Dorsolateral prefrontal cortex (tissue), 120 donors: ENCODE measurements at regions of chr13 and their contacts with region 1.

Region 1: GRCh38 chr13:65656740-65657329 is 1573.3 kb downstream of the PCDH9 start:
- DNase-seq: no peak
- H3K4me3 ChIP-seq: no peak overlapping the region
- H3K27ac ChIP-seq: no peak overlapping the region
- H3K27me3 ChIP-seq: no peaks in the 10 kb centered on the region
- CTCF ChIP-seq: peak; percentile 35 to 80 (median 62)

Region 2: DNA sequence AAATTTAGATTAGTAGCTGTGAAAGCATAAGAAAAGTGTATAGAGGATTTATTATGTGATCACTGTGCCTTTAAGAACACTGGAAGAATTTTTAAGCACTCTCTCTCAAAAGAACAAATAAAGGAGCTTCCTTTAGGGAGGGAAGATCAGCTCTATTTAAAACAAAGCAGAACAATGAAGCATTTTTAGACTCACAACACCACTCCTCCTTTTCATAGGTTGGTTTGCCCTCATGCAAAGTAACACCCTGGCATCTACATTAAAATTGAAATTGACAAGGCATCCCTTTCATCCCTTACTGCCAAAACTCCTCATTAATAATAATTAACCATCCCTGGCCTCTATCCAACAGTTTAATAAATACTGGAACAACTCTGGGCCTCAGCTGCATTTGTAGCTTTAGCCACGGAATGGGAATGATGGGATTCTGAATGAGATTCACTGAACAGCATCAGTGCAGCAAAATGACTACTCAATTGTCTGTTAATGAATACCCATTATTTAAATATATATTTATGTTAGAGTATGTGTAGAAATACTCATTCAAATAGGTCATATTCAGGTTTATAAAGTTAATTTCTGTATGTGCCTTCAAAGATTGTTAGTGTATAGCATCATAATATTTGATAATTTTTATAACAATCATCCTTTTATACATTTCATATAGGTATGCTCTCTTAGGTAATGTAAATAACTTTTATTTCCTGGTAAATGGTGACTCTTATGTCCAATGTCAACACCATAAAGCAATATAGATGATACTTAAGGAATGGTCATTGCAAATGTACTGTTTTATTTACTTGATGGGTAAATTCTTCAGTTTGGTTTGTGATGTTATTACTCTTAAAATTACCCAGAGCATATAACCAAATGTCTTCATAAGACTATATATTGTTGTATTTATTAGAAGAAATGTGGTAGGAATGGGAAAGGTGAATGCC is 644.4 kb after region 1 on chr13:
- intact Hi-C with region 1: no loop called
- DNase-seq: no peak
- H3K4me3 ChIP-seq: no peak overlapping the region
- H3K27ac ChIP-seq: peak overlapping the region in 10 of 59 donors; percentile 13 to 53 (median 26)
- H3K27me3 ChIP-seq: no peaks in the 10 kb centered on the region
- CTCF ChIP-seq: no peak

Region 3: DNA sequence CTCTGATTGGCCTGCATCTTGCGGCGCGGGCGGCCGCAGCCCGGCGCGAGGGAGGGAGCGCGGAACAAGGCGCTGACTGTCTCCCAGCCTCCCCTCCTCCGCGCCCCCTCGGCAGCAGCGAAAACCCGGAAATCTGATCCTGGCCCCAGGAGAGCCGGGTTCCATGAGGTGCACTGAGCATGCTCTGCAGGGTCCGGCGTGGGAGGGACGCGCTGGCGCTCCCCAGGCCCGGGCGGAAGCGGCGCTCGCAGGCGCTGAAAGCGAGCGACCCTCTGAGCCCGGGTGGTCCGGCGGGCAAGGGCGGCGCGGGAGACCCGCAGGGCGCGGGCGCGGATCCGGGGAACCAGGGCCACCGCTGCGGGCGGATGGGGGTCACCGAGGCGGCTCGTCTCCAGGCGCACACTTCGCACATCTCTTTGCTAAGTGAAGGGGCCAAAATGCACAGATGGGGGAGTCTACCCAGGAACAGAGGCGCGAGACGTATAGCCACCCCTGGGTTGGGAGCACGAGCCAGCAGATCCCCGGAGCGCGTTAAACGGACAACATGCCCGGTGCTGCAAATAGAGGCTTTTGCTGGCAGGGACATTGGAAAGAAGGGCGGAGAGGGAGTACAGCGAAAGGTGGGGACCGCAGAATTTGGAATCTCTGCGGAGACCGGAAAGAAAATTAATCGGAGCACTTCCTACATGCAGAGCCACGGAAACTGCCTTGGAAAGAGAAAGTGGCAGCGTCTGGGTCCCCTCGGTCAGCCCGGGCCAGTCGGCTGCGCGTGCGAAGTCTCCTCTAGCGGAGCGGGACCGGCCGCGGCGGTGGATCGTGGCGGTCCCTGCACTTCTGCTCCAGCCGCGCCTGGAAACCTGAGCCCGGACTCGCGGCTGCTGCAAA is 1573.8 kb after region 1 on chr13:
- intact Hi-C with region 1: loop called in 1 of 2 experiments (anchors 5 kb)
- DNase-seq: peak; percentile 39 to 99 (median 99)
- H3K4me3 ChIP-seq: peak overlapping the region; percentile 53 to 97 (median 84)
- H3K27ac ChIP-seq: peak overlapping the region; percentile 85 to 99 (median 96)
- H3K27me3 ChIP-seq: no peaks in the 10 kb centered on the region
- CTCF ChIP-seq: peak in 17 of 56 donors; percentile 5 to 44 (median 23)